AG04450 (cell line): ENCODE measurements at regions of chr1 and their contacts with region 1.

Region 1: GRCh38 chr1:110053557-110054428 is 16.7 kb downstream of the ALX3 start:
- DNase-seq: no peak
- H3K4me3 ChIP-seq: no peak overlapping the region
- H3K27ac ChIP-seq: no peak overlapping the region
- H3K27me3 ChIP-seq: no peaks in the 10 kb centered on the region
- CTCF ChIP-seq: peak; percentile 98

Region 2: GRCh38 chr1:110067893-110068645 is 14.3 kb after region 1 on chr1:
- CTCF ChIA-PET with region 1: interaction called, 16 read pairs
- POLR2A ChIA-PET with region 1: no interaction called
- DNase-seq: no peak
- H3K4me3 ChIP-seq: no peak overlapping the region
- H3K27ac ChIP-seq: no peak overlapping the region
- H3K27me3 ChIP-seq: peaks cover 69% of the 10 kb centered on the region
- CTCF ChIP-seq: no peak

Region 3: GRCh38 chr1:110106013-110106941 is 52.5 kb after region 1 on chr1:
- CTCF ChIA-PET with region 1: interaction called, 64 read pairs
- POLR2A ChIA-PET with region 1: no interaction called
- DNase-seq: peak; percentile 43
- H3K4me3 ChIP-seq: no peak overlapping the region
- H3K27ac ChIP-seq: no peak overlapping the region
- H3K27me3 ChIP-seq: peaks cover 40% of the 10 kb centered on the region
- CTCF ChIP-seq: peak; percentile 98

Region 4: GRCh38 chr1:110118636-110119615 is 65.1 kb after region 1 on chr1:
- CTCF ChIA-PET with region 1: interaction called, 16 read pairs
- POLR2A ChIA-PET with region 1: no interaction called
- DNase-seq: no peak
- H3K4me3 ChIP-seq: no peak overlapping the region
- H3K27ac ChIP-seq: no peak overlapping the region
- H3K27me3 ChIP-seq: peaks cover 23% of the 10 kb centered on the region
- CTCF ChIP-seq: no peak

Region 5: GRCh38 chr1:110150330-110151174 is 96.8 kb after region 1 on chr1 and contains the start of gene SLC6A17:
- CTCF ChIA-PET with region 1: interaction called, 11 read pairs
- POLR2A ChIA-PET with region 1: no interaction called
- DNase-seq: no peak
- H3K4me3 ChIP-seq: peak within 1 kb of the TSS; percentile 39; the same call in 1 of the 2 replicates
- H3K27ac ChIP-seq: no peak within 1 kb of the TSS
- H3K27me3 ChIP-seq: peaks cover 19% of the 10 kb centered on the region
- CTCF ChIP-seq: 0 out of 2 replicates have a peak, but pooled peaks have one; percentile 5
- polyA plus RNA-seq, gene SLC6A17: 0.02 and 0.05 TPM in 2 replicates

Region 6: DNA sequence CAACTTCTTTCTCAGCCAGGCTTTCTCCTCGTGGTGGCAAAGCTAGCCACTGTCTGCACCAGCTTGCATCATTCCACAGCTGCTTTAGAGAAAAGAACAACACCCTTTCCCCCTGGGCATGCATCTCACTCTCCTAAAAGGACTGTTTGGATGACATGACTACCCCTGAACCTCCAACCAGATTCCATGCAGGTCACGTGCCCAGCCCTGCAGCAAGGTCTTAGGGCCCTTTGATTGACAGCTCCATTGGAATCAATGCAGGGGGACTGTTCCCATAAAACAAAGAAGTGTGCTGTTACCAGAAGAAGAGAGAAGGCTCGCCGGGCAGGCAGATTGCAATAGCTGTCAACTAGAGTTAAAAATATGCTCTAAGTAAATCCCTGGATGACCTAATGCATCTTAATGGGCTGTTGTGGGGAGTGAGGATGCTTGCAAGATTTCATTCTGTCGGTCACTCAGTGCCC is 527.9 kb after region 1 on chr1:
- CTCF ChIA-PET with region 1: no interaction called
- POLR2A ChIA-PET with region 1: no interaction called
- DNase-seq: no peak
- H3K4me3 ChIP-seq: no peak overlapping the region
- H3K27ac ChIP-seq: no peak overlapping the region
- H3K27me3 ChIP-seq: no peaks in the 10 kb centered on the region
- CTCF ChIP-seq: no peak